ENCODE measurements at regions of chr3 and their contacts with region 1.

Region 1: GRCh38 chr3:87350364-87351199 is 74.2 kb upstream of the POU1F1 start:
- DNase-seq: peak; percentile 74
- H3K4me3 Mint-ChIP-seq: no peak overlapping the region
- H3K27ac Mint-ChIP-seq: no peak overlapping the region
- H3K4me1 Mint-ChIP-seq: no peaks in the 10 kb centered on the region
- H3K27me3 Mint-ChIP-seq: peaks cover 11% of the 10 kb centered on the region

Region 2: GRCh38 chr3:87260270-87260669 is 90.3 kb before region 1 on chr3:
- intact Hi-C with region 1: loop called (anchors 5 kb)
- DNase-seq: peak; percentile 82
- H3K4me3 Mint-ChIP-seq: no peak overlapping the region
- H3K27ac Mint-ChIP-seq: no peak overlapping the region
- H3K4me1 Mint-ChIP-seq: no peaks in the 10 kb centered on the region
- H3K27me3 Mint-ChIP-seq: peaks cover 8% of the 10 kb centered on the region

Region 3: GRCh38 chr3:87298111-87298718 is 52.4 kb before region 1 on chr3:
- intact Hi-C with region 1: loop called (anchors 2 kb)
- DNase-seq: no peak
- H3K4me3 Mint-ChIP-seq: no peak overlapping the region
- H3K27ac Mint-ChIP-seq: no peak overlapping the region
- H3K4me1 Mint-ChIP-seq: no peaks in the 10 kb centered on the region
- H3K27me3 Mint-ChIP-seq: peaks cover 2% of the 10 kb centered on the region

Region 4: GRCh38 chr3:87503900-87504508 is 153.4 kb after region 1 on chr3:
- intact Hi-C with region 1: loop called (anchors 2 kb)
- DNase-seq: peak; percentile 67
- H3K4me3 Mint-ChIP-seq: no peak overlapping the region
- H3K27ac Mint-ChIP-seq: no peak overlapping the region
- H3K4me1 Mint-ChIP-seq: no peaks in the 10 kb centered on the region
- H3K27me3 Mint-ChIP-seq: no peaks in the 10 kb centered on the region

Region 5: GRCh38 chr3:88113311-88114162 is 763.0 kb after region 1 on chr3:
- intact Hi-C with region 1: loop called (anchors 10 kb)
- DNase-seq: peak; percentile 88
- H3K4me3 Mint-ChIP-seq: no peak overlapping the region
- H3K27ac Mint-ChIP-seq: no peak overlapping the region
- H3K4me1 Mint-ChIP-seq: peaks cover 19% of the 10 kb centered on the region
- H3K27me3 Mint-ChIP-seq: no peaks in the 10 kb centered on the region

Region 6: GRCh38 chr3:88180398-88180999 is 829.9 kb after region 1 on chr3:
- intact Hi-C with region 1: loop called (anchors 5 kb)
- DNase-seq: peak; percentile 80
- H3K4me3 Mint-ChIP-seq: no peak overlapping the region
- H3K27ac Mint-ChIP-seq: no peak overlapping the region
- H3K4me1 Mint-ChIP-seq: no peaks in the 10 kb centered on the region
- H3K27me3 Mint-ChIP-seq: peaks cover 15% of the 10 kb centered on the region